ENCODE measurements at regions of chr2 and their contacts with region 1.

Region 1: GRCh38 chr2:234564699-234565098 is 67.8 kb upstream of the ARL4C start:
- DNase-seq: peak; percentile 55
- H3K4me3 ChIP-seq: no peak overlapping the region
- H3K27ac ChIP-seq: peak overlapping the region in 1 of 2 experiments; percentile 86; a peak in 2 of 4 replicates
- H3K4me1 ChIP-seq: peaks cover 0 to 9% of the 10 kb centered on the region in 2 experiments; a peak in 3 of 4 replicates
- H3K27me3 ChIP-seq: no peaks in the 10 kb centered on the region
- CTCF ChIP-seq: peak; percentile 48
- EP300 ChIP-seq: no peak
- RAD21 ChIP-seq: peak; percentile 75

Region 2: DNA sequence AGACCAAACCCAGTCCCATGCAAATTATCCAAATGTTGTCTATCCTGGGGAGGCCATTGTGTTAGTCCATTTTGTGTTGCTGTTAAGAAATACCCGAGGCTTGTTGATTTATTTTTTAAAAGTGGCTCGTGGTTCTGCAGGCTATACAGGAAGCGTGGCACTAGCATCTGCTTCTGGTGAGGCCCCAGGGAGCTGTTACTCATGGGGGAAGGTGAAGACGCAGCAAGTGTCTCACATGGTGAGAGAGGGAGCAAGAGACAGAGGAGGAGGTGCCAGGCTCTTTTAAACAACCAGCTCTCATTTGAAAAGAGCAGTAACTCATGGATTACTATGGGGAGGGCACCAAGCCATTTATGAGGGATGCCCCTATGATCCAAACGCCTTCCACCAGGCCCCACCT is 12.5 kb after region 1 on chr2:
- CTCF ChIA-PET with region 1: interaction called, 13 read pairs
- POLR2A ChIA-PET with region 1: no interaction called
- DNase-seq: no peak
- H3K4me3 ChIP-seq: no peak overlapping the region
- H3K27ac ChIP-seq: no peak overlapping the region
- H3K4me1 ChIP-seq: peaks cover 0 to 5% of the 10 kb centered on the region in 2 experiments; a peak in 2 of 4 replicates
- H3K27me3 ChIP-seq: no peaks in the 10 kb centered on the region
- CTCF ChIP-seq: no peak
- EP300 ChIP-seq: no peak
- RAD21 ChIP-seq: no peak

Region 3: GRCh38 chr2:236298924-236299475 is 1734.3 kb after region 1 on chr2:
- CTCF ChIA-PET with region 1: no interaction called
- POLR2A ChIA-PET with region 1: no interaction called
- DNase-seq: no peak
- H3K4me3 ChIP-seq: no peak overlapping the region
- H3K27ac ChIP-seq: no peak overlapping the region
- H3K4me1 ChIP-seq: no peaks in the 10 kb centered on the region
- H3K27me3 ChIP-seq: no peaks in the 10 kb centered on the region
- CTCF ChIP-seq: no peak
- EP300 ChIP-seq: no peak
- RAD21 ChIP-seq: no peak